Thyroid gland (tissue), 4 donors: ENCODE measurements at regions of chr5 and their contacts with region 1.

Region 1: DNA sequence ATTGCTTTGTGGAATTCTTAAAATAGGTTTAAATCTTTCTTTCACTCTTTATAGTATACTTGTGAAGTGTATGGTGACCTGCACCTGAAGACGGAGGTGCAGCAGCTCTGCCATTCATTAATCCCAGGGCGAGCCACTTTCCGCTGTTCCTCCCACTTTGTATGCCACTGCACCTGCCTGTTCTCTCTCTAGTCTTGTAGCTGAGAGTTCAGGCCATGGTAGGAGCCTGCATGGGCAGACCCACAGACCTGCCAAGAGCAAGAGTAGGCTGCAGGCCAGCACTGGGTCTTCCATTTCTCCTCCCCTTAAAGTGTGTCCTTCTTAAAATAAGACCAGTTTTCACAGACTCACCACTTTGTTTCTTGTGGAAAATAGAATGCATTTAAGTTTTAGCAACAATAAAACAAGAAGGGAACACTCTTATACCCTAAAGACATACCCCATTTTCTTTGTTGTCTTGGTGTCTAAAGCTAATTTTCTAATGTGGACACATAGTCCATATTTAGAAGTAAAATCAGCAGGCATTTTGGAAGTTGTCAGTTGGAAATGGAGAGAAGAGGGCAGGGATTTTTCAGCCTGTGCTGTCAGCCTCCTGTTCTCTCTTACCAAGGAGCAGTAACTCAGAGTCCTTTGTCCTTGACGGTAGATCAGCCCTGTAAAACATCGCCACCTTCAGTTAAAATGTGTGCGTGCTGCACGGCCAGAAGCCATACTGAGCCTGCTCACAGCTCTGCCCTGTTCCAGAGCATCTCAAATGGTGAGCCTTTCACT is 103.2 kb downstream of the SNCAIP start:
- DNase-seq: peak; percentile 47 to 52
- H3K4me3 ChIP-seq: no peak overlapping the region
- H3K27ac ChIP-seq: no peak overlapping the region
- H3K4me1 ChIP-seq: no peaks in the 10 kb centered on the region
- H3K27me3 ChIP-seq: no peaks in the 10 kb centered on the region
- CTCF ChIP-seq: peak; percentile 13 to 67 (median 49)
- POLR2A ChIP-seq: no peak

Region 2: GRCh38 chr5:122040636-122041302 is 374.4 kb before region 1 on chr5:
- intact Hi-C with region 1: no loop called
- DNase-seq: no peak
- H3K4me3 ChIP-seq: no peak overlapping the region
- H3K27ac ChIP-seq: no peak overlapping the region
- H3K4me1 ChIP-seq: no peaks in the 10 kb centered on the region
- H3K27me3 ChIP-seq: no peaks in the 10 kb centered on the region
- CTCF ChIP-seq: no peak
- POLR2A ChIP-seq: no peak

Region 3: DNA sequence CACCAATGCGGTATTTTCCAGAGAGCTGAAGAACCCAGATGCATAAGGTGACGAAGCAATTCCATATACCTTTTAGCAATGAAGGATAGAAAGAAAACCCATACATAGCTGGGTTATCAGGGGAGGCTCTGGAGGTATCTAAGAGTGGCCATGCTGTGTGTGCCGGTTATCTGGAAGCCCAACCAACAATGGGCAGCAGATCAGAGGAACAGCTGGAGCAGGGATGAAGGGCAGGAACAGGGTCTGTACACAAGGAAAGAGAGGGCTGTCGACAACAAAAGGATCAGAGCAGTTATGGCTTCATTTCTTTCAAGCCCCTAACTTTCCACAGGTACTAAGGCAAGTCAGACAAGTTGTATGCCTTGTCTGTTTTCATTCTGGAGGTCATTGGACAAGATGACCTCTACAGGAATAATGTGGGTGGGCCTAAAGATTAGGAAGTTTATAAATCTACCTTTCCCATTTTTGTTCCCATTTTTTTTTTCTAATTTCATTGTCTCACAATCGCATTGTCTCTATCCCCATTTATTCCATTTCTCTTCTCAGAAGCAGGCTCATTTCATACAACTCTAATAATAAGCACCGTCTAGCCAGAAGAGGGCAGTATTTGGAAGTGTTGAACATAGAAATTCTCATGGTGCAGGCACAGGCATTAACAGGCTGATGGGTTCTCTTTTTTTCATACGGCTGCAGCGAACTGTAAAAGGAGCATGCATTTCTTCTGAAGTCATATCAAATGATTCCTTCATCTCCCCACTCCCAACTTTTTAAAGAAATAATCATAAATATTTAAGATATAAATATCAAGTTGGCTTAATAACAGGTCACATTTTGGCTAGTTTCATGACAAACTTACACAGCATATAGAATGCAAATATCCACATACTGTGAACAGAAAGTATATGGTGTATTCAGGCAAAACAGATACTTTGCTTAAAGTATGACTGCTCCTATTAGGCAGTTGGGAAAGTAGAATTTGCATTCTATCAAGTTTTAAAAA is 222.4 kb before region 1 on chr5:
- intact Hi-C with region 1: loop called (anchors 5 kb)
- DNase-seq: peak; percentile 7 to 8
- H3K4me3 ChIP-seq: no peak overlapping the region
- H3K27ac ChIP-seq: no peak overlapping the region
- H3K4me1 ChIP-seq: no peaks in the 10 kb centered on the region
- H3K27me3 ChIP-seq: no peaks in the 10 kb centered on the region
- CTCF ChIP-seq: peak in 5 of 6 experiments; percentile 31 to 67 (median 64)
- POLR2A ChIP-seq: no peak

Region 4: GRCh38 chr5:122295138-122295537 is 120.1 kb before region 1 on chr5:
- intact Hi-C with region 1: loop called (anchors 10 kb)
- DNase-seq: no peak
- H3K4me3 ChIP-seq: no peak overlapping the region
- H3K27ac ChIP-seq: no peak overlapping the region
- H3K4me1 ChIP-seq: no peaks in the 10 kb centered on the region
- H3K27me3 ChIP-seq: no peaks in the 10 kb centered on the region
- CTCF ChIP-seq: peak in 3 of 6 experiments; percentile 12 to 28 (median 13)
- POLR2A ChIP-seq: no peak